Lower leg skin (tissue), 4 donors: ENCODE measurements at regions of chr12 and their contacts with region 1.

Region 1: DNA sequence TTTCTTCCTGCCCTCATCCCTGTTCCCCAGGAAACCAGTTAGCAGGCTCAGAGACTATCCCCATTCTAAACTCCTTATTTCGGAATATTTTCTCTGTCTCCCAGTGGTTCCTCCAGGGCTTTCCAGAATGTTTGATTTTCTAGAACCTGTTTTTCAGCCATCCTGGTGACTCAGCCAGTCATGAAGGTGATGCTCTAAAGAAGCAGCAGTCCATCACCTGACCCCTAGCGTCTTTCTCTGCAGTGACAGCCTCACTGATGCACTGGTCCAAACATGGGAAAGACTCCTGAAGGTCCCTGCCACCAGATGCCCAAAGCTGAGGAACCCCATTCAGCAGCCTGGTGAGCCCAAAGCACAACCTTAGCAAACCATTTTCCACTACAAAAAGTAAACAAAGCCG is 212.6 kb downstream of the PHETA1 start:
- DNase-seq: no peak
- H3K4me3 ChIP-seq: no peak overlapping the region
- CTCF ChIP-seq: no peak
- POLR2A ChIP-seq: no peak

Region 2: GRCh38 chr12:112450725-112451124 is 1294.4 kb after region 1 on chr12:
- intact Hi-C with region 1: loop called (anchors 5 kb)
- DNase-seq: no peak
- H3K4me3 ChIP-seq: no peak overlapping the region
- CTCF ChIP-seq: no peak
- POLR2A ChIP-seq: no peak